Naive thymus-derived CD4-positive, alpha-beta T cell (primary cell): ENCODE measurements at regions of chr3 and their contacts with region 1.

Region 1: DNA sequence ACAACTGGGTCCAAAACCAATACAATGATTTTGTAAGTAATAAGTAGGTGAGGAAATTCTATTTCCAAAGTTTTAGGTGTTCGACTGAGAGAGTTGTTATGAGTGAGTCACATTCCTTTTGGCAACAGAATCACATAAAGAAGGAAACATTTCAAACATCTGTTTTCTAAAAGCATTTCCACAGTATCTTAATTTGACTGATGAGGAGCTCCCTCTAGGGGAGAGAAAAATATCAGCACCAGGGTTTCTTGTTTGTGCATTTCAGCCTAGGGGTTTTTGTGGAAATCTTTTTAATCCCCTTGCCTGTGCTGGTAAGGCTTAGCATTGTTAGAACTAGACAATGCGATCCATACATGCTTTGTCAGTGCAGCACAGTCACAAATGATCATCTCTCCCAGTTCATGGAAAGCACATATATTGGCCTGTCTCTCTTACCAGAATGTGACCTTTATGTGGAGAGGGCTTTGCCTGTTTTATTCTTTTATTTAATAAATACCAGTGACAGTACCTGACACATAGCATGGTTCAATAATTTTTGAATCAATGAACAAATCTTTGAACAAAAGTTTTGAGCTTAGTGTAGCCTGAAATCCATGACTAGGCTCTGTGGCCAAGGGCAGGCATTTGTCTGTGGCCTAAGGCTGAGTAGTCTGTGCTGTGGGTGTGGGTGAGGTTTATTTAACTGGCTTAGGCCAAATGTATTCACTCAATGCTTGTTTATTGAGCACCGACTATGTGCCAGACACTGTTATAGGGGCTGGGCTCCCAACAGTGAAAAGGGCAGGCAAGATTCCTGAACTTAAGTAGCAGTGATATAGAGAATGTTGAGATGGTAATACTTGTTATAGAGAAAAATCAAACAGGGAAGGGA is 21.1 kb upstream of the IQCF6 start:
- DNase-seq: peak in 7 of 9 donors; percentile 23 to 66 (median 55)
- ATAC-seq: peak; percentile 70
- H3K4me3 ChIP-seq: no peak overlapping the region
- H3K4me3 Mint-ChIP-seq: no peak overlapping the region
- H3K27ac ChIP-seq: no peak overlapping the region
- H3K27ac Mint-ChIP-seq: no peak overlapping the region
- H3K4me1 ChIP-seq: no peaks in the 10 kb centered on the region
- H3K4me1 Mint-ChIP-seq: peaks cover 4 to 48% (median 13%) of the 10 kb centered on the region in 7 donors
- H3K27me3 ChIP-seq: no peaks in the 10 kb centered on the region
- H3K27me3 Mint-ChIP-seq: peaks cover 5 to 16% (median 13%) of the 10 kb centered on the region in 5 donors

Region 2: GRCh38 chr3:51391075-51391567 is 409.0 kb before region 1 on chr3 and contains the start of gene RBM15B:
- CTCF ChIA-PET with region 1: interaction called, 4 read pairs
- POLR2A ChIA-PET with region 1: interaction called, 3 read pairs
- intact Hi-C with region 1: loop called (anchors 1 to 2 kb)
- DNase-seq: peak; percentile 94 to 98 (median 96)
- ATAC-seq: peak; percentile 95
- H3K4me3 ChIP-seq: peak within 1 kb of the TSS; percentile 52
- H3K4me3 Mint-ChIP-seq: peak within 1 kb of the TSS; percentile 76 to 89 (median 83)
- H3K27ac ChIP-seq: peak within 1 kb of the TSS; percentile 90
- H3K27ac Mint-ChIP-seq: peak within 1 kb of the TSS; percentile 79 to 91 (median 88)
- H3K4me1 ChIP-seq: peaks cover 46 to 53% of the 10 kb centered on the region in 2 donors
- H3K4me1 Mint-ChIP-seq: peaks cover 35 to 75% (median 67%) of the 10 kb centered on the region in 7 donors
- H3K27me3 ChIP-seq: no peaks in the 10 kb centered on the region
- H3K27me3 Mint-ChIP-seq: no peaks in the 10 kb centered on the region
- total RNA-seq, gene RBM15B: 29.9 to 40.6 (median 31.3) TPM

Region 3: DNA sequence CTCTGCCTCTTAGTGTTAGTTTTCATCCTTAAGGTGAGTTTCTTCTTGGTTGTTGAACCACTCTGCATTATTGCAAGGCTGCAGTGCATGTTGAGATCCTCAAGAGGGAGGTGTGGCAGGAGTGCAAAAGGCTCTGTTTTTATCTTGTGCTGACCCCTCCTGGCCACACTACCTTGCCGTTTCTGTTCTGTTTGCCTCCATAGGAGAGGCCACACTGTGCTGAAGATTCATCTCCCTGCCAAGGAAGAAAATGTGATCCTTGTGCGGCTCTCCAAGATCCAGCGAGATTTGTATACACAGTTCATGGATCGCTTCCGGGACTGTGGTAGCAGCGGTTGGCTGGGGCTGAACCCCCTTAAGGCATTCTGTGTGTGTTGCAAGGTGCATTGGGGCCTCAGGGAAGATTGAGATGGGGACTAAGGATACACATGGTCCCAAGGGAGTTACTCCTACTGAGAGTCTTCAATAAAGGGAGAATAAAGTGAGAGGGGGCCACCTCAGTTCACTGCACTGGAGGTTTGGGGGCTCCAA is 162.1 kb before region 1 on chr3:
- CTCF ChIA-PET with region 1: interaction called, 4 read pairs
- POLR2A ChIA-PET with region 1: no interaction called
- intact Hi-C with region 1: loop called (anchors 1 kb)
- DNase-seq: peak in 6 of 9 donors; percentile 3 to 23 (median 15)
- ATAC-seq: peak; percentile 80
- H3K4me3 ChIP-seq: no peak overlapping the region
- H3K4me3 Mint-ChIP-seq: no peak overlapping the region
- H3K27ac ChIP-seq: no peak overlapping the region
- H3K27ac Mint-ChIP-seq: peak overlapping the region in 1 of 9 donors; percentile 36
- H3K4me1 ChIP-seq: no peaks in the 10 kb centered on the region
- H3K4me1 Mint-ChIP-seq: peaks cover 0 to 3% (median 0%) of the 10 kb centered on the region in 7 donors
- H3K27me3 ChIP-seq: no peaks in the 10 kb centered on the region
- H3K27me3 Mint-ChIP-seq: no peaks in the 10 kb centered on the region

Region 4: GRCh38 chr3:51718547-51719409 is 81.3 kb before region 1 on chr3:
- CTCF ChIA-PET with region 1: no interaction called
- POLR2A ChIA-PET with region 1: no interaction called
- intact Hi-C with region 1: loop called (anchors 1 kb)
- DNase-seq: peak in 4 of 9 donors; percentile 6 to 71 (median 16)
- ATAC-seq: peak; percentile 84
- H3K4me3 ChIP-seq: no peak overlapping the region
- H3K4me3 Mint-ChIP-seq: no peak overlapping the region
- H3K27ac ChIP-seq: no peak overlapping the region
- H3K27ac Mint-ChIP-seq: peak overlapping the region in 3 of 9 donors; percentile 17 to 59 (median 18)
- H3K4me1 ChIP-seq: peaks cover 14 to 20% of the 10 kb centered on the region in 2 donors
- H3K4me1 Mint-ChIP-seq: peaks cover 21 to 40% (median 35%) of the 10 kb centered on the region in 7 donors
- H3K27me3 ChIP-seq: no peaks in the 10 kb centered on the region
- H3K27me3 Mint-ChIP-seq: no peaks in the 10 kb centered on the region

Region 5: DNA sequence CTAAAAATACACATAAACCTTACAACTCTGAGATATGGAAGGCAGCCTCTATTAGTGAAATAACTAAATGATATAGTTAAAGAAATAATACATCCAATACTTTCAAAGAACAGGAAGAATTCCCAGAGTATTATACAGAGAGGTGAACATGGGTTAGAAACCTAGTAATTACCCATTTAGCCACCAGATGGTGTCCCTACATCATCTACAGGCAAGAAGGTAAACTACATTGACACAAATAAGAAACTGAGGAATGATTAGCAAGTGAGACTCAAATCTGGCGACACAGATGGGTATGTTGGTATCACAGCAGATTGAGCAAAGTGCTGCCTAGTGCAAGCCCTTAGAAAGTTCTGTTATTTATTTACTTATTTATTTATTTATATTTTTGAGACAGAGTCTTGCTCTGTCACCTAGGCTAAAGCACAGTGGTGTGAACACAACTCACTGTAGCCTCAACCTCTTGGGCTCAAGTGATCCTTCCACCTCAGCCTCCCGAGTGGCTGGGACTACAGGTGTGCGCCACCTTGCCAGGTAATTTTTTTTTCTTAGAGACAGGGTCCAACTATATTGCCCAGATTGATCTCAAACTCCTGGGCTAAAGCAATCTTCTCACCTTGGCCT is 942.4 kb after region 1 on chr3:
- CTCF ChIA-PET with region 1: no interaction called
- POLR2A ChIA-PET with region 1: no interaction called
- intact Hi-C with region 1: no loop called
- DNase-seq: peak in 5 of 9 donors; percentile 18 to 35 (median 20)
- ATAC-seq: peak; percentile 50
- H3K4me3 ChIP-seq: no peak overlapping the region
- H3K4me3 Mint-ChIP-seq: no peak overlapping the region
- H3K27ac ChIP-seq: no peak overlapping the region
- H3K27ac Mint-ChIP-seq: no peak overlapping the region
- H3K4me1 ChIP-seq: no peaks in the 10 kb centered on the region
- H3K4me1 Mint-ChIP-seq: peaks cover 0 to 2% (median 0%) of the 10 kb centered on the region in 7 donors
- H3K27me3 ChIP-seq: no peaks in the 10 kb centered on the region
- H3K27me3 Mint-ChIP-seq: no peaks in the 10 kb centered on the region